Activated B cell treated with CpG ODN at 0.5 μM for 24 hours (primary cell): ENCODE measurements at regions of chr19 and their contacts with region 1.

Region 1: DNA sequence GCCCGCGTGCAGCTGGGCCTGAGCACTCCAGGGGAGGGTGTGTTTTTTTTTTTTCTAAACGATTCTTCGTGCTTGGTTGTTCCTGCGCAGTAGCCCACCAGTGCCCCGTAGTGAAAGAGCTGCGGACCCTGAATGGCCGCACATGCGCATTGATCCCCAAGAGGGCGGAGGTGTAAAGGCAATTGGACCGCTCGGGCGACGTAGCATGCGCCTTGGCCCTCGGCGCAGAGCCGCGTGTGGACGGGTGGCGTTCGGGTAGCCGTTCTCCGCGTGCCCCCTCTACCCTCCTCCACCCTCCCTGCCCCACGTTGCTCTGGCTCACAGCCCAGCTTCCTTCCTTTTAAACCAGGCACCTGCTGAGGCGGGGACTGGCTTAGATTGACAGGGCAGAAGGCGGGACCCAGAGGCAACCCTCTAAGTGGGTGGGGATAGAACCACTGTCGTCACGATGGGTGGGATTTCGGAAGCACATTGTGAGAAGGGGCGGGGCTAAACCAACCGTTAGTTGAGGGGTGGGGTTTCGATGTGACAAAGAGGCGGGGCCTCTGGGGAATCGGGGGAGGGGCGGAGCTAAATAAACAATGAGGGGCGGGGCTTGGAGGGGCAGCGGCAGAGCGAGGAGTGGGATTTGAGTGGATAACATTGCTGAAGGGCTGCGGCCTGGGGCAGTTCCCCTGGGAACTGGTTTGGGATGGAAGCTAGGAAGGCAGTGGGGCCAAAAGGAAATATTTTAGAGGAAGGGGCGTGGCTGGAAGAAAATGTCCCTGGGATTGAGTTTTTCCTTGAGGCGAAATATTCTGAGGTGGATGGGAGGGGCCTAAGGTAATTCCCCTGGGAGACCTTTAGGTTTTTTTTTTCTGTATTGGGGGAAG is 543 bp upstream of the NUP62 start:
- DNase-seq: peak; percentile 84
- ATAC-seq: peak; percentile 83
- H3K4me3 Mint-ChIP-seq: peak overlapping the region; percentile 92
- H3K27ac Mint-ChIP-seq: peak overlapping the region; percentile 89
- H3K4me1 Mint-ChIP-seq: peaks cover 48% of the 10 kb centered on the region
- H3K27me3 Mint-ChIP-seq: no peaks in the 10 kb centered on the region
- CTCF ChIP-seq: no peak

Region 2: GRCh38 chr19:49808711-49809159 is 121.1 kb before region 1 on chr19:
- CTCF ChIA-PET with region 1: no interaction called
- POLR2A ChIA-PET with region 1: interaction called, 8 read pairs
- intact Hi-C with region 1: loop called (anchors 1 kb)
- DNase-seq: peak; percentile 88
- ATAC-seq: peak; percentile 56
- H3K4me3 Mint-ChIP-seq: peak overlapping the region; percentile 91
- H3K27ac Mint-ChIP-seq: peak overlapping the region; percentile 74
- H3K4me1 Mint-ChIP-seq: peaks cover 49% of the 10 kb centered on the region
- H3K27me3 Mint-ChIP-seq: no peaks in the 10 kb centered on the region
- CTCF ChIP-seq: no peak

Region 3: DNA sequence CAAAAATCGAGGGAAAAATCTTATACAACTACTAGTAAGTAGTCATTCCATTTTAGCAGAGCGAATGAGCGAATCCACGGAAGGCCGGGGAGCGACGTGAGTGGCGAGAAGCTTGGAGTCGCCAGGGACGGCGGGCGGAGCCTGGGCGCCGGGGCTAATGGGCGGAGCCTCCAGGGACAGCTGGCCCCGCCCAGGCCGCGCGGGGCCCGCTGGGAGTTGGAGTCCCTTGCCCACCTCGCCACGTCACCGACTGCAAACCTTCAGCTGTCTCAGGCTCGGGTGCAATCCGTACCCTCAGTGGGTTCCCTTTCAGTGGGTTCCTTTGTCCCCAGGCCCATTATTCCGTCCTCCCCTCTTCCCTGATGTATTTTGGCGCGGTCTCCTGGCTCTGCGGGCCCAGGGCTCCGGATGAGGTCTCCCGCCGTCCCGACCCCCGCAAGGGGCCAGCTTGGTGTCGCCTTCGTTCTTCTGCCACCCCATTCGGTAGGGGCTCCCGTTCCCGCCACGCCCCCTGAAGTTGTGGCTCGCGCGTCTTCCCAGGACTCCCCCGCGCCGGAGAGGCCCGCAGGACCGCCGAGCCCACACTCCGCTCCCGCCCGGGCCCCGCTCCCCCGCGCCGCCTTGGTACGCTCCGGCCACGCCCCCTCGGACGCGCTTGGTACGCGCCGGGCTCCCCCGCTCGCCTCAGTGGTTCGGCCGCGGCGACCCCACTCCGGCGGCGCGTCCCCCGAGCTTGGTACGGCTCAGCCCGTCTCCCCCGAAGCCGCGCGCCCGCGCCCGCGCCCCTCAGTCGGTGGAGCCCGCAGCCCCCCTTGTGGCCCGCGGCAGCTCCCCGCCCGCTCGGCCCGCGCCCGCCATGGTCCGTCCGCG is 79.1 kb before region 1 on chr19 and contains the start of gene PTOV1:
- CTCF ChIA-PET with region 1: no interaction called
- POLR2A ChIA-PET with region 1: interaction called, 14 read pairs
- intact Hi-C with region 1: loop called (anchors 1 kb)
- DNase-seq: peak; percentile 96
- ATAC-seq: peak; percentile 84
- H3K4me3 Mint-ChIP-seq: peak within 1 kb of the TSS; percentile 92
- H3K27ac Mint-ChIP-seq: peak within 1 kb of the TSS; percentile 95
- H3K4me1 Mint-ChIP-seq: peaks cover 56% of the 10 kb centered on the region
- H3K27me3 Mint-ChIP-seq: no peaks in the 10 kb centered on the region
- CTCF ChIP-seq: no peak
- total RNA-seq, gene PTOV1: 103 and 107 TPM in 2 replicates

Region 4: GRCh38 chr19:49889687-49890348 is 40.0 kb before region 1 on chr19:
- CTCF ChIA-PET with region 1: interaction called, 15 read pairs
- POLR2A ChIA-PET with region 1: interaction called, 229 read pairs
- intact Hi-C with region 1: loop called (anchors 1 kb)
- DNase-seq: no peak
- ATAC-seq: peak; percentile 66
- H3K4me3 Mint-ChIP-seq: peak overlapping the region; percentile 82
- H3K27ac Mint-ChIP-seq: peak overlapping the region; percentile 7
- H3K4me1 Mint-ChIP-seq: peaks cover 41% of the 10 kb centered on the region
- H3K27me3 Mint-ChIP-seq: no peaks in the 10 kb centered on the region
- CTCF ChIP-seq: peak; percentile 39

Region 5: GRCh38 chr19:49911381-49912145 is 18.3 kb before region 1 on chr19:
- CTCF ChIA-PET with region 1: no interaction called
- POLR2A ChIA-PET with region 1: interaction called, 166 read pairs
- intact Hi-C with region 1: loop called (anchors 2 kb)
- DNase-seq: no peak
- ATAC-seq: peak; percentile 80
- H3K4me3 Mint-ChIP-seq: peak overlapping the region; percentile 68
- H3K27ac Mint-ChIP-seq: peak overlapping the region; percentile 89
- H3K4me1 Mint-ChIP-seq: peaks cover 76% of the 10 kb centered on the region
- H3K27me3 Mint-ChIP-seq: no peaks in the 10 kb centered on the region
- CTCF ChIP-seq: no peak

Region 6: GRCh38 chr19:49946418-49946817 is 16.6 kb after region 1 on chr19:
- CTCF ChIA-PET with region 1: no interaction called
- POLR2A ChIA-PET with region 1: no interaction called
- intact Hi-C with region 1: no loop called
- DNase-seq: no peak
- ATAC-seq: no peak
- H3K4me3 Mint-ChIP-seq: no peak overlapping the region
- H3K27ac Mint-ChIP-seq: no peak overlapping the region
- H3K4me1 Mint-ChIP-seq: peaks cover 11% of the 10 kb centered on the region
- H3K27me3 Mint-ChIP-seq: peaks cover 21% of the 10 kb centered on the region
- CTCF ChIP-seq: no peak

Region 7: DNA sequence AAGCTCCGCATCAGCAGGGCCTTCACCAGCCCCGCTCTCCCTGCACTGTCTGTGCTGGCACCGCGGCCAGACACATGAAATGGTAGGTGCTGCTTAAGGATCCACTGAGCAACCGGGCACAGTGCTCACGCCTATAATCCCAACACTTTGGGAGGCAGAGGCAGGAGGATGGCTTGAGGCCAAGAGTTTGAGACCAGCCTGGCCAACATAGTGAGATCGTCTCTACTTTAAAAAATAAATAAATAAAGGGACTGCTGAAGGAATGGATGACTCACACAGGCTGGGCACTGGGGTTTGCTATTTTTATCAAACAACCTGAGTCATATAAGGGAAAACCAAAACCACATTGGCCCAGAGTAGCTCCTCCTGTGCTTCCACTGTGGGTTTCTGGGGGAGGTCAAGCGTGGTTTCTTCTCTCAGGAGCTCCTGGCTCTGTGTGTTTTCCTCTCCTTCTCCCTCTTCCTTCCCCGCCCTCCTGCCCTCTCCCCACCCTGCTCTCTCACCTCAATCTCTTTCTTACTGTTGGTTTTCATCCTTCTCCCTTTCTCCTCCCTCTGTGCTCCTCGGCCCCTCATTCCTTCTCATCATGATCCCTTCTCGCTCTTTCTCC is 74.1 kb after region 1 on chr19:
- CTCF ChIA-PET with region 1: no interaction called
- POLR2A ChIA-PET with region 1: no interaction called
- intact Hi-C with region 1: no loop called
- DNase-seq: no peak
- ATAC-seq: peak; percentile 50
- H3K4me3 Mint-ChIP-seq: no peak overlapping the region
- H3K27ac Mint-ChIP-seq: no peak overlapping the region
- H3K4me1 Mint-ChIP-seq: peaks cover 3% of the 10 kb centered on the region
- H3K27me3 Mint-ChIP-seq: no peaks in the 10 kb centered on the region
- CTCF ChIP-seq: no peak

Region 8: DNA sequence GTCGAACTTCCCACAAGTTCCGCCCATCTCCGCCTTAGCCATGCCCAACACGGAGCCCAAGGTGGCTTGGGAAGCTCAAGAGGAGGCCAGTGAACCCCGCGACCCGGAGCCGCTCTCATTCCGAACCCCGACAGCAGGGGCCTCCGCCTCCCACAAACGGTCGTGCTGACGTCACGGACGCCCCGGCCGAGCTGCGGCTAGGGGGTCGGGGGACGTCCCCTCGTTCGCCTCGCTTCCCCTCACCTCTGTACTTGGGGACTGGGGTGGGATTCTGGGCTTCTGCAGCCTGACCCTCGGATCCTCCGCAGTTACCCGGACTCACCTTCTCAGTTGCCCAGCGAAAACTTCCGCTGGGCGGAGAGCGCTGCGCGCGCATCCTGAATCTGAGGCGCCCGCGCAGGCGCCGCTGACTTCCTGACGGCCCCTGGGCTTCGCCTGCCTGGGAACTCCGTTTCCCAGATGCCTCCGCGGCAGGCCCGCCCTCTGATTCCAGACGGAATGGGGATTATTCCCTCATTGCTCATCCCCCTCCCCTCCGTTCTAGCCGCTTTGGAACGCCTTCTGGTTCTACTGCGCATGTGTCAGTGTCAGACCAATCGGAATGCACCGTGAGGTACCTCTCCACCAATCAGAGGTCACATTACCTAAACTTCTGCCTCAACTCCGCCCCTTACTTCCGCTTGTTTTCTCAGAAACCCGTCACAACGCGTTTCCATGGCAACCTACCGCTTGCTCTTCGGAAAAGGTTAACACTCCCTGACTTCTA is 95.4 kb after region 1 on chr19 and contains the start of gene VRK3:
- CTCF ChIA-PET with region 1: no interaction called
- POLR2A ChIA-PET with region 1: no interaction called
- intact Hi-C with region 1: loop called (anchors 1 kb)
- DNase-seq: peak; percentile 95
- ATAC-seq: peak; percentile 87
- H3K4me3 Mint-ChIP-seq: peak within 1 kb of the TSS; percentile 97
- H3K27ac Mint-ChIP-seq: peak within 1 kb of the TSS; percentile 100
- H3K4me1 Mint-ChIP-seq: peaks cover 46% of the 10 kb centered on the region
- H3K27me3 Mint-ChIP-seq: no peaks in the 10 kb centered on the region
- CTCF ChIP-seq: no peak
- total RNA-seq, gene VRK3: 71.1 and 82.6 TPM in 2 replicates